Activated naive CD4-positive, alpha-beta T cell treated with anti-CD3 and anti-CD28 coated beads for 36 hours (primary cell): ENCODE measurements at regions of chr14 and their contacts with region 1.

Region 1: DNA sequence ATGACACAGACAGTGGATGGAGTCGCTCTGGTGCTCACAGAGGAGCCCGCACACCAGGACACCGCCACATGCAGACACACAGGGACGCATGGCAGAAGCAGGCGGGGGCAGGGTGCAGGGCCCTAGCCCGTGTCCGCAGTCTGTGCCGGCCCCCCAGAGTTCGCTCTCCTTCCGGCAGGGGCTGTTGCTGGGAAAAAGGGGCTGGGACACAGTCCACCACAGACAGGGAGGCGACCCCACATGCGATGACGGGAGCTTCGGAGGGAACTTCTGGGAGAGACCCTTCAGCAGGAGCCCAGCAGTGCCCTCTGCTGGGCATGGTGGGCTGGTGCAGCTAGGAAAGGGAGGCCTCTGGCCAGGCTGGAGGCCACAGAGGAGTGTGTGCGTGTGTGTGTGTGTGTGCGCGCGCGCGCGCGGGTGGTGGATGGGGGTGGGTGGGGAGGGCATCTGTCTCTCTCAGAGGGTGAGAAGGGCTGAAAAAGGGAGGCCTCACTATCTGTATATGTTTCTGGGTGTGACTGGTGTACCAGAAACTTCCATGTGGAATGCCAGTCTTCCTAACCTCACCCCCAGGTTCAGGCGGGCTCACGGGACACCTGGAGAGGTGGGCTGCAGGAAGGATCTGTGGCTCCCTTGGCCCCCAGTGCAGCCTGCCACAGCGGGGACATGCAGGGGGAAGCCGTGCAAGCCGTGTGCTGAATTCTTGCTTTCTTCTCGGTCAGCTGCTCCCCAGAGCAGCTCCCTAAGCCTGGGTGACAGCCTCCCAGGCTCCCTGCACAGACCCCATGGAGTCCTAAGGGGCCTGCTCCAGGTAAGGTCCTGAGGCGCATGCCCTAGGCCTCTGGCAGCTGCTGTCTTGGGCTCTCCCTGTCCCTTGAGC is 60.7 kb downstream of the PLEKHG3 start:
- DNase-seq: peak; percentile 74
- H3K4me3 Mint-ChIP-seq: peak overlapping the region; percentile 45
- H3K27ac Mint-ChIP-seq: no peak overlapping the region
- H3K4me1 Mint-ChIP-seq: peaks cover 6% of the 10 kb centered on the region
- H3K27me3 Mint-ChIP-seq: no peaks in the 10 kb centered on the region

Region 2: GRCh38 chr14:64671591-64671990 is 93.3 kb before region 1 on chr14:
- CTCF ChIA-PET with region 1: interaction called, 67 read pairs
- intact Hi-C with region 1: loop called (anchors 1 kb)
- DNase-seq: no peak
- H3K4me3 Mint-ChIP-seq: no peak overlapping the region
- H3K27ac Mint-ChIP-seq: no peak overlapping the region
- H3K4me1 Mint-ChIP-seq: peaks cover 16% of the 10 kb centered on the region
- H3K27me3 Mint-ChIP-seq: no peaks in the 10 kb centered on the region

Region 3: DNA sequence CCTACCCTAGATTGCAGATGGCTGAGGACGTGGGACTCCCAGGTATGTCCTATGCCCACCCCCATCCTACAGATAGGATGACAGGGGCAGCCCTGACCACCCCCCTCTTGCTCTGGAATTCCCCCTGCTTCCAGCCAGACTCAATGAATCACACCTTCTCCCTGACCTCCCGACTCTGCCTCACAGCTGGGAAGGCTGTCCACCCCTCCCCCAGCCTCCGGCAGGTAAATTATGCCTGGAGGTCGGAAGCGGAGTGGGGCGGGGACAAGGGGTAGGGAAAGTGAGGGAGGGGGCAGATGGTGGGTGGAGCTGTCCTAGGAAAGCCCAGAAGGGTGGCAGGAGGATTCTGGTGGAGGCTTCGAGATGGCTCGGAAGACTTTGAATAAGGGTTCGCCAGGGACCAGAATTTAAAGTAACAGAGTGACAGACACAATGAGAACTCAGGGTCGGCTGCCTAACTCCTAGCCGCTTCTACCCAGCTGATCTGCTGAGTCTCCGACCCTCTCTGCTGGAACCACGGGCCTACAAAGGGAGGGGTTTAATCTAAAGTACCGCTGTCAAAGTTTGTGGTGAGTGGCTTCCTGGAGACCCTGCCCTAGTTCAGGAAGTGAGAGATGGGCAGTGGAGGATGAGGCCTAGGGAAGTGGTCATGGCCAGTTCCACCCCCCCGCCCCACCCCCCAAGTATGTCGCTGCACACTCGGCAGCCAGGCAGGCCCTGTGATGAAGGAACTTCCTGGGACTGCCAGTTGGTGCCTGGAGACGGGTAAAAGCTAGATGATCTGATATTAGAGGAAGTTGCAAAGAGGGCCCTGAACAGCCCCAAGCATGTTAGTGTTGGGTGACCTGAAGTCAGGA is 56.5 kb before region 1 on chr14:
- CTCF ChIA-PET with region 1: no interaction called
- intact Hi-C with region 1: loop called (anchors 5 kb)
- DNase-seq: peak; percentile 40
- H3K4me3 Mint-ChIP-seq: no peak overlapping the region
- H3K27ac Mint-ChIP-seq: peak overlapping the region; percentile 4
- H3K4me1 Mint-ChIP-seq: peaks cover 35% of the 10 kb centered on the region
- H3K27me3 Mint-ChIP-seq: peaks cover 21% of the 10 kb centered on the region

Region 4: GRCh38 chr14:64970801-64971470 is 206.1 kb after region 1 on chr14:
- CTCF ChIA-PET with region 1: no interaction called
- intact Hi-C with region 1: no loop called
- DNase-seq: no peak
- H3K4me3 Mint-ChIP-seq: peak overlapping the region; percentile 67
- H3K27ac Mint-ChIP-seq: no peak overlapping the region
- H3K4me1 Mint-ChIP-seq: peaks cover 10% of the 10 kb centered on the region
- H3K27me3 Mint-ChIP-seq: no peaks in the 10 kb centered on the region